CD8-positive, alpha-beta T cell (primary cell): ENCODE measurements at regions of chr14 and their contacts with region 1.

Region 1: DNA sequence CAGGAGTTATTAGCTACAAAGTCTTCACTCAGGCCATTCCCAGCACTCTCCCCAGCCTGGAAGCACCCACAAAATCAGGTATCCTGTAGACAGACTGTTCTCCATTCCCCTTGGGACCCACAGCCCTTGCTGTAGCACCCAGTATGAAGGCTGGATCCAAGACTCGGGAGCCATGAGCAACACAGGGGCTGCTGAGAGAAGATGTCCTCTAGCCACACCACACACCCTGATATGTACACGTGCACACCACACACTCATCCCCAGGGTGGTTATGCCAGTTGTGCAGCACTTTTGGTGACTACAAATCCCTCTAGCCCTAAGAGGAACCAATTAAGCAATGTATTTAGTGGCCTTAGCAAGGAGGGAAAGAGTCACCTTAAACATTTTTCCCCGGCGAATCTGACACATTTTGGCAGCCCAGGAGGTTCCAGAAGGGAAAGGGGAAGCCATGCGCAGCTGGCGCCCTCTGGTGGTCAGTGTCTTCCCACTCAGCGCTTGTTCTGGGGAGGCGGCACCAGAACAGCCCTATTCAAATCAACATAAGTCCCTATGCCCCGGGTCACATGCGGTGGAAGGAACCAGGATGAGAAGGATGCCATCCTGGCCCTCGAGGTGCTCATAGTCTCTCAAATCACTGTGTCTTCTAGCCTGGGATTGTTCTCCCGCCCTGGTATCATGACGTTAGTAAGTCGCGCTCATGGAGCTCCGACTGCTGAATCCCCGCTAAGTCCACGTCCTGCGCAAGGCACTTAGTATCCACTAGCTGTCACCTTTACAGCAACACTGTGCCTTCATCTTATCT is 96.9 kb downstream of the GCH1 start:
- DNase-seq: peak; percentile 36 to 82 (median 71)
- ATAC-seq: peak; percentile 82
- H3K4me3 ChIP-seq: no peak overlapping the region
- H3K4me3 Mint-ChIP-seq: no peak overlapping the region
- H3K27ac ChIP-seq: no peak overlapping the region
- H3K27ac Mint-ChIP-seq: no peak overlapping the region
- H3K4me1 ChIP-seq: no peaks in the 10 kb centered on the region
- H3K4me1 Mint-ChIP-seq: peaks cover 5% of the 10 kb centered on the region
- H3K27me3 ChIP-seq: no peaks in the 10 kb centered on the region
- H3K27me3 Mint-ChIP-seq: peaks cover 8% of the 10 kb centered on the region
- CTCF ChIP-seq: peak; percentile 76

Region 2: GRCh38 chr14:54730156-54730961 is 75.4 kb before region 1 on chr14:
- CTCF ChIA-PET with region 1: no interaction called
- POLR2A ChIA-PET with region 1: no interaction called
- intact Hi-C with region 1: no loop called
- DNase-seq: peak in 2 of 9 experiments; percentile 3 to 27
- ATAC-seq: peak; percentile 34
- H3K4me3 ChIP-seq: peak overlapping the region in 1 of 2 experiments; percentile 3
- H3K4me3 Mint-ChIP-seq: peak overlapping the region; percentile 57
- H3K27ac ChIP-seq: no peak overlapping the region
- H3K27ac Mint-ChIP-seq: no peak overlapping the region
- H3K4me1 ChIP-seq: peaks cover 10% of the 10 kb centered on the region
- H3K4me1 Mint-ChIP-seq: peaks cover 12% of the 10 kb centered on the region
- H3K27me3 ChIP-seq: peaks cover 0 to 5% of the 10 kb centered on the region in 2 experiments
- H3K27me3 Mint-ChIP-seq: peaks cover 15% of the 10 kb centered on the region
- CTCF ChIP-seq: no peak

Region 3: DNA sequence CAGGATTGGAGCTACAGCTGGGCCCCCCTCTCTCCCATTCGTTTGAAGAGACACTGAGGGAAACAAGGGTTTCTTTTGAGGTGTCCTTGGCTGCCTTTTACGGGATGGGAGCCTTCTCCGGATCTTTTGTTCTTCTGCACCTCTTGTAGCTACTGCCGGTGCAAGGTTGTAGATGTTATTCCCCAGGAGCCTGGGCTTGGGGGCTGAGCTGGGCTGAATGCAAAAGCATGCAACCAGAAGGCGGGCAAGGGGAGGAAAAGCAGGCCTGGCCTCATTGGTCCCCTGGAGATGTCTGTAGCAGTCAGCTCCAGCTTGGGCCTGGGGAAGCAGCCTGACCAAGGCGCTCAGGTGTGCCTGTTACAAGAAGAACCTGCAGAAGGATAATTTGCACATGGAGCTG is 13.4 kb before region 1 on chr14:
- CTCF ChIA-PET with region 1: interaction called, 12 read pairs
- POLR2A ChIA-PET with region 1: no interaction called
- intact Hi-C with region 1: no loop called
- DNase-seq: no peak
- ATAC-seq: no peak
- H3K4me3 ChIP-seq: no peak overlapping the region
- H3K4me3 Mint-ChIP-seq: no peak overlapping the region
- H3K27ac ChIP-seq: no peak overlapping the region
- H3K27ac Mint-ChIP-seq: no peak overlapping the region
- H3K4me1 ChIP-seq: no peaks in the 10 kb centered on the region
- H3K4me1 Mint-ChIP-seq: no peaks in the 10 kb centered on the region
- H3K27me3 ChIP-seq: peaks cover 0 to 2% of the 10 kb centered on the region in 2 experiments
- H3K27me3 Mint-ChIP-seq: no peaks in the 10 kb centered on the region
- CTCF ChIP-seq: no peak